CD8-positive, alpha-beta T cell (primary cell): ENCODE measurements at regions of chr1 and their contacts with region 1.

Region 1: DNA sequence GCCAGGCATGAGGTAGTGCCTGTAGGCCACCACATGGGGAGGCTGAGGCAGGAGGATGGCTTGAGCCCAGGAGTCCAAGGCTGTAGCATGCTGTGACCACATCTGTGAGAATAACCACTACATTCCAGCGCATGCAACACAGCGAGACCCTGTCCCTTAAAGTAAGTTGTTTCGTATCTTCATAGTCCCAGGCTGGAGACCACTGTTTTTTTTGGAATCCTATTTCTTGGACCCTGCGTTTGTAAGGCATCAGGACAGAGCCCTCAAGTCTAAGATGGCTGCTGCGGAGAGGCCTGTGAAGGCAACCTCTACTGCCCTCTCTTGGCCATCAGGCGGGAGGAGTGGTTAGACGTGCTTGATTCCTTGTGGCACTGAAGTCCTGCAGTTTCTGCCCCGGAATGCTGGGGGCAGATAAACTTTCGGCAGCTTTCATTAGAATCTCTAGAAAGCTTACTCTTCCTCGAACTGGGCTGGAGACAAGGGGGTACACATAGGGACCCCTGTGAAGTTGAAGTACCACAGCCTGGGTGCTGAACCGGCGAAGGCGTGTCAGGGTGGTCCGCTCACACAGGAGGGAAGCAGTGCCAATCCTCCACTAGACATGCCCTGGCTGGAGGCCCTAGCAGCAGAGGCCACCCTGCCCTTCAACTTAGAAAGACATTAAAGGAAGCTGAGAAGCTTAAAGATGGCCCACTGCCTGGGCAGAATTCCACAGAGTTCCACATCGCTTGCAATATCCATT is 36.6 kb downstream of the RABIF start:
- DNase-seq: peak in 6 of 9 experiments; percentile 18 to 55 (median 40)
- ATAC-seq: peak; percentile 56
- H3K4me3 ChIP-seq: no peak overlapping the region
- H3K4me3 Mint-ChIP-seq: no peak overlapping the region
- H3K27ac ChIP-seq: no peak overlapping the region
- H3K27ac Mint-ChIP-seq: no peak overlapping the region
- H3K4me1 ChIP-seq: no peaks in the 10 kb centered on the region
- H3K4me1 Mint-ChIP-seq: no peaks in the 10 kb centered on the region
- H3K27me3 ChIP-seq: no peaks in the 10 kb centered on the region
- H3K27me3 Mint-ChIP-seq: no peaks in the 10 kb centered on the region
- CTCF ChIP-seq: peak; percentile 45

Region 2: DNA sequence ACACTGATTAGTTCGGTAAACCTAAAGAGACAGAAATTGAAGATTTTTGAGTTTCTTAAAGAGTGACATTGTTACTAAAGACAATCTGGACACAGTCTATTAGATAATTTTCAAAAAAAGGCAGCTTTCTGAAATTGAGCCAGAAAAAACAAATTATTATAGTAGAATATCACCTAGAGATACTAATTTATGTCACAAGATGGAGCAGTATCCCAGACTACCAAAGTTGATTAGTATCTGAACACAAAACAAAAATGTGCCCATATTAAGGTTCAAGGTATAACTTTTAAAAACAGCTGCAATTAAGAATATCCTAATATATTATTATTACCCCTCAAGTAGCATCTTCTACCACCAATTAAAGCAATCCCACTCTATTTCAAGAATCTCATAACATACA is 101.6 kb before region 1 on chr1:
- CTCF ChIA-PET with region 1: interaction called, 3 read pairs
- POLR2A ChIA-PET with region 1: no interaction called
- intact Hi-C with region 1: loop called (anchors 1 to 2 kb)
- DNase-seq: peak in 2 of 9 experiments; percentile 7 to 22
- ATAC-seq: no peak
- H3K4me3 ChIP-seq: no peak overlapping the region
- H3K4me3 Mint-ChIP-seq: no peak overlapping the region
- H3K27ac ChIP-seq: no peak overlapping the region
- H3K27ac Mint-ChIP-seq: no peak overlapping the region
- H3K4me1 ChIP-seq: no peaks in the 10 kb centered on the region
- H3K4me1 Mint-ChIP-seq: no peaks in the 10 kb centered on the region
- H3K27me3 ChIP-seq: no peaks in the 10 kb centered on the region
- H3K27me3 Mint-ChIP-seq: no peaks in the 10 kb centered on the region
- CTCF ChIP-seq: peak; percentile 44

Region 3: GRCh38 chr1:202888531-202889360 is 36.4 kb after region 1 on chr1 and contains the start of gene RABIF:
- CTCF ChIA-PET with region 1: no interaction called
- POLR2A ChIA-PET with region 1: no interaction called
- intact Hi-C with region 1: no loop called
- DNase-seq: peak; percentile 91 to 98 (median 96)
- ATAC-seq: peak; percentile 92
- H3K4me3 ChIP-seq: peak within 1 kb of the TSS; percentile 84 to 97
- H3K4me3 Mint-ChIP-seq: peak within 1 kb of the TSS; percentile 94
- H3K27ac ChIP-seq: peak within 1 kb of the TSS; percentile 92 to 94
- H3K27ac Mint-ChIP-seq: peak within 1 kb of the TSS; percentile 96
- H3K4me1 ChIP-seq: peaks cover 18% of the 10 kb centered on the region
- H3K4me1 Mint-ChIP-seq: peaks cover 30% of the 10 kb centered on the region
- H3K27me3 ChIP-seq: no peaks in the 10 kb centered on the region
- H3K27me3 Mint-ChIP-seq: no peaks in the 10 kb centered on the region
- CTCF ChIP-seq: no peak
- total RNA-seq, gene RABIF: 10.1 to 10.8 TPM